Prostate gland (tissue), 2 donors: ENCODE measurements at regions of chr1 and their contacts with region 1.

Region 1: GRCh38 chr1:61049850-61050540 is 32.4 kb upstream of the NFIA start:
- DNase-seq: peak; percentile 95
- H3K4me3 ChIP-seq: peak overlapping the region; percentile 87 to 96
- H3K27ac ChIP-seq: peak overlapping the region; percentile 95 to 96
- H3K4me1 ChIP-seq: peaks cover 6% of the 10 kb centered on the region
- H3K27me3 ChIP-seq: no peaks in the 10 kb centered on the region
- CTCF ChIP-seq: peak; percentile 97 to 98 (median 98)
- POLR2A ChIP-seq: no peak

Region 2: DNA sequence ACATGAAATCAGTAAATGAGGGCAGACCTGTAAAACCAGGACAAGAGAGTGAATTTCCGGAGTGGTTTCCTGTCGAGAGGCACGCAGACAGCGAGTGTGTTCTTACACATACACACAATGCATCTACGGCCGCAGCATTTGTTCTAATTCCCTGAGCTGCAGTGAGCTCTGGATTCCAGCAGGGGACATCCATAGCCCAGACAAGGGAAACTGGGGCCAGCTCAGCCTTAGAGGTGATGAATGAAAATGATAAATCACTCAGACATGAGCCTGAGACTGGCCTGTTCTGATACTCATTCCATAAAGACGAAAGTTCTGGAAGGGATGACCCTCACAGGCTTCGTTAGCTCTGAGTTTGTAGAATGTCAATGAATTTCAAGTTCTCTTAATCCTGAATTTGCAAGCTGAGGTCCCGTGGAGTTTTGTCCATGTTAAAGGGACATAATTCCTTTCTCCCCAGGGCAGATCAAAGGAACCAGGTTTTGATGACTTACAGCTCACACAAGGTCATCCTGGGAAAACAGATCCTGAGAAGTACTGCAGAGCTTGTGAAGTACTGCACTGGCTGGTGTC is 768.5 kb before region 1 on chr1:
- intact Hi-C with region 1: loop called (anchors 2 kb)
- DNase-seq: peak; percentile 63
- H3K4me3 ChIP-seq: no peak overlapping the region
- H3K27ac ChIP-seq: no peak overlapping the region
- H3K4me1 ChIP-seq: no peaks in the 10 kb centered on the region
- H3K27me3 ChIP-seq: no peaks in the 10 kb centered on the region
- CTCF ChIP-seq: peak; percentile 71 to 88 (median 82)
- POLR2A ChIP-seq: no peak

Region 3: DNA sequence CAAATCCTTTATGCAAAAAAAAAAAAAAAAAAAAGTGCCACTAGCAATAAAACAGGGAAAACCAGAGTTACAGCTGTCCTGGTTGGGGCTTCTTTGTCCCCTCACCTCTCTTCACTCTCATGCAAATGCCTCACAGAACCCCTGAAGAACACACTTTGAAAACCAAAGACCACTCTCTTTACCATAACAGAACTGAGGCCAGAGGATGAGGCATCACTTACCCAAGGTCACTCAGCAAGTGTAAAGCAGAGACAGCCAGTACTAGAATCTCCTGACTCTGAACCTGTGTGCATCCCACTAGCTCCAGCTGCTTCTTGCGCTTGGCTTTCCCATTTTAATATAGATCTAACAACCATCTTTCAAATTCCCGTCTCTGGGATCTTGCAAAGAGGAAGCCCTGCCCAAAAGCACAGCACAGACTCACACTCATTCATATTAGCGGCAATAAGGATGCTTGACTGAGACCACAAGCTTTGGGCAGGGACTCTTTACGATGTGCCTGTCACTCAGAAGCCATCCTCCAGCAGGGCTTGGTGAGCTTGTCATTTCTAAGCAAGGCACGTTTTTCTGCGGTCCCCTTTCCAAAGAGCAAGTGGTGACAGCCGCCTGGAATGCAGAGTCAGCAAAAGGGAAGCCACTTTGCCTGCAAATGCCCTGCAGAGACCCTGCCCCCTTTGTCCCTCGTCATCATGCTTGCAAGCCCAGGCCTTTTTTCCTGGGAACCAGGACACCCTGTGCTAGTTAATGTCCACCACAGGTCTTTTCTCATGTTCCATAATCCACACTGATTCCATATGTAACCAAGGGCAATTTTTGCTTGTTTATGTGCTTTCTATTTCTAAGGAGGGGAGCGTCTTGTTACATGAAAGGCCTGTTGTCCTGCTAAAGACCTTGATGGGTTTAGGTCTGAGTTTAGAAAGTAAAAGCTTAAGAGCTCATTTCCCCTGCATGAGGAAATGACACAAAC is 44.1 kb before region 1 on chr1:
- intact Hi-C with region 1: no loop called
- DNase-seq: no peak
- H3K4me3 ChIP-seq: no peak overlapping the region
- H3K27ac ChIP-seq: no peak overlapping the region
- H3K4me1 ChIP-seq: no peaks in the 10 kb centered on the region
- H3K27me3 ChIP-seq: no peaks in the 10 kb centered on the region
- CTCF ChIP-seq: no peak
- POLR2A ChIP-seq: no peak

Region 4: DNA sequence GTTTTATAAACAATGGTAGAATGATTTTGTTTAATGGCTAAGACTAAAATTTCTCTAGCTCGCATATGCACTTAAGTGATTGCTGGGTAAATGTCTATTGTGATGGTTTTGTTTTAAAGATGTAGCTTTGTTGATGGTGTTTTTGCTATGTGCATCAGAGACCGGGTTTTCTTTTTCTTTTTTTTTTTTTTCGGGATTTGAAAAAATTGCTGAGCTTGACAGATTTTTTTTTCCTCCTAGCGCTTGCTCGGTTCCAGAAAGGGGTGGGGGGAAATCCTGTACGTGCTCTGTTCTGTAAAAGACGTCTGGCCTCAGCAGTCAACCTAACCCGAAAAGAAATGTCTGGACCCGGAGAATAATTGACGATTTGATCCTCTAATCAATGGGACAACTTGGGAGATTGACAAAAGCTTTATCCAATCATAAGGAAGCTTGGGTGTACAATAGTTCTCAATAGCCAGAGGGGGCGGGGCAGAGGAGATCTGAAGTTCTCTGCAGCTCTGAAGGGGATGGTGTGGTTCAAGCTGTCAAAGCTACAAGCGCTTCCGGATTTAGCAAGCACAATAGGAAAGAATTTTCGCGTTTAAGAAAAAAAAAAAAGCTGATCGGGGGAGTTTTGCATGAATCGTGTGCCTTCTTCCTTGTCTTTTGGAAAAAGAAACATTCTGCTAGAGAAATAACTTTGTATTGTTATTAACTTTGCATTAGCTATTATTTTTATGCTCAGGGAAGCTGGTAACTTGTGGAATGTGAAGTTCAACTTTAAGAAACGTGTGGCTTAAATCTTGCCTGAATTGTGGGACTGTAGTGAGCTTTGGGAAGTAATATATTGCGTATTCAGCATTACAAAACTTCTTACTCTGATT is 27.9 kb after region 1 on chr1:
- intact Hi-C with region 1: loop called (anchors 2 kb)
- DNase-seq: peak; percentile 95
- H3K4me3 ChIP-seq: peak overlapping the region; percentile 29 to 51
- H3K27ac ChIP-seq: peak overlapping the region; percentile 89 to 97
- H3K4me1 ChIP-seq: peaks cover 12% of the 10 kb centered on the region
- H3K27me3 ChIP-seq: no peaks in the 10 kb centered on the region
- CTCF ChIP-seq: peak in 1 of 4 experiments; percentile 20
- POLR2A ChIP-seq: peak; percentile 22

Region 5: DNA sequence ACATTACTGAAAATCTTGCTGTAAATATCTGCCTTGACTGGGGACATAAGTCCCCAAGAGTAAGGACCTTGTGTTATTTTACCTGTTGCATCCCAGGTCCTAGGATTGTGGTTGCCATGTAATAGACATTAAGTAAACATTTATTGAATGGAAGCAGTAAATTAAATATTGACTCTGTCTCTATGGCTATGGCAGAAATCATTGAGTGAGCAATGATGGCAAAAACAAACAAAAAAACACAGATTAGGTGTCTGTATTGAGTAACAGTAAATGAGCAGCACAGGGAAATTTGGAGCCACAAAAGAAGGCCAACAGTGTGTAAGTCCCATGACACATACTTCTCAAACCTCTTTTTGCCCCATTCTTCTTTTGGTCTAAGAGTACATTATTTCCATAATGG is 272.8 kb after region 1 on chr1:
- intact Hi-C with region 1: loop called (anchors 5 kb)
- DNase-seq: no peak
- H3K4me3 ChIP-seq: no peak overlapping the region
- H3K27ac ChIP-seq: no peak overlapping the region
- H3K4me1 ChIP-seq: no peaks in the 10 kb centered on the region
- H3K27me3 ChIP-seq: no peaks in the 10 kb centered on the region
- CTCF ChIP-seq: no peak
- POLR2A ChIP-seq: no peak

Region 6: GRCh38 chr1:61397935-61398334 is 347.9 kb after region 1 on chr1:
- intact Hi-C with region 1: loop called (anchors 5 kb)
- DNase-seq: peak; percentile 13
- H3K4me3 ChIP-seq: no peak overlapping the region
- H3K27ac ChIP-seq: no peak overlapping the region
- H3K4me1 ChIP-seq: no peaks in the 10 kb centered on the region
- H3K27me3 ChIP-seq: no peaks in the 10 kb centered on the region
- CTCF ChIP-seq: no peak
- POLR2A ChIP-seq: no peak

Region 7: DNA sequence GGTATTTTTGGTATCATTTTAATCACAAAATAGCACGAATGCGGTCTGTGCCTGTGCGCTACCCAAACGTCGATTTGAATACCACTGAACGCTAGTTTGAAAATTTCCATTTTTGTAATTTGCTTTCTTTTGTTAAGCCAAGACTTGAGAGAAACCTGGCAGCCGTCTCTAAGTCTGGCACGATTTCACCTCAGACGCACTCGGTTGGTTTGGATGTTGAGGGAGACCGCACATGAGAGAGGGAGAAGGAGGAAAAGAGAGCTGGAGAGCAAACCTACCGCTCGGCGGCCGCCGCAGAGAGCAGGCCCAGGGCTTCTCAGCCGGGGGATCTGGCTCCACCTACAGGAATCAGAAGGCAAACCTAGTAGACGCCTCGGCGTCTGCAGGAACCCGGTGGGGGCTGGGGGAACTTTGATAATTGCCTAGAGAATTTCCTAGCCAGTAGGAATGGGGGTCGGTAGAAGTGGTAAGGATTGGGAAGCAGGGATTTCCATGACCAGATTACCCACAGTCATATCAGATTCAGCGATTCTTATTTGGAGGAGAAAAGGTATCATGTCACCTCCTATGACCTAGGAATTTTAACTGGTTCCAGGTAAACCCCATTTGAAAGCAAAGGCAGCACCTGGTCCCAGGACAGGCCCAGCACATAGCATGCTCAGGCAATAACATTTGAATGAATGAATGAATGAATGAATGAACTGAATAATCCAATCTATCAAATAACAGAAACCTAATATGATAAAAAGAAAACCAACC is 591.8 kb after region 1 on chr1:
- intact Hi-C with region 1: loop called (anchors 1 kb)
- DNase-seq: peak; percentile 64
- H3K4me3 ChIP-seq: peak overlapping the region in 1 of 2 donors; percentile 5
- H3K27ac ChIP-seq: peak overlapping the region; percentile 67
- H3K4me1 ChIP-seq: peaks cover 11% of the 10 kb centered on the region
- H3K27me3 ChIP-seq: no peaks in the 10 kb centered on the region
- CTCF ChIP-seq: peak; percentile 25 to 73 (median 58)
- POLR2A ChIP-seq: no peak

Region 8: DNA sequence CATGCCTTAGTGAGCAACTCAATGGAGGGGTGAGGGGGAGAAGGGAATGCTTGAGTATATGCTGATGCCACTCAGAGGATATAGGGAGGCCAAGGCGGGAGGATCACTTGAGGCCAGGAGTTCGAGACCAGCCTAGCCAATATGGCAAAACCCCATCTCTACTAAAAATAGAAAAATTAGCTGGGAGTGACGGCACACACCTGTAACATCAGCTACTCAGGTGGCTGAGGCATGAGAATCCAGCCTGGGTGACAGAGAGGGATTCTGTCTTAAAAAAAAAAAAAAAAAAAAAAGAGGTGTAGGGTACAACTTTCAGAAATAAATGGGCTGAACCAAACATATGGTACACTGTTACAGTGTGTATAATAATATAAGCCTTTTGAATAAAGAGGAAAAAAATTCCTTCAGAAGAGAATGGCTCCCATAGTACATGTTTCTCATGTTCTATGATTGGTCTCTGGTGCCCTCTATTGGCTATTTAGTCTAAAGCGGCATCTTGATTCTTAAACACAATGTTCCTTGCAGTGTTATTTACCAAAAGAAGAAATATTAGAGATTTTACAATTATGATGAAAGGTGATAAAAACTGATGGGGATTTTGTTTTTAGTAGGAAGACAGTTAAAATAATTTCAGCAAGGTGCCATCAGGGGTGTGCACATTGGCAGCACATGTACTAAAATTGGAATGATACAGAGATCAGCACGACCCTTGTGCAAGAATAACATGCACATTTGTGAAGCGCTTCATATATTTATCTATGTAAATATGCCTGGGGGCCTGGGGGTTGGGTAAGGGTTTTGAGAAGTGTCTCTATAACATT is 802.1 kb after region 1 on chr1:
- intact Hi-C with region 1: loop called (anchors 5 kb)
- DNase-seq: peak; percentile 33
- H3K4me3 ChIP-seq: no peak overlapping the region
- H3K27ac ChIP-seq: no peak overlapping the region
- H3K4me1 ChIP-seq: no peaks in the 10 kb centered on the region
- H3K27me3 ChIP-seq: no peaks in the 10 kb centered on the region
- CTCF ChIP-seq: peak; percentile 25 to 77 (median 70)
- POLR2A ChIP-seq: no peak